Upper lobe of right lung (tissue), 1 donor: ENCODE measurements at regions of chr13 and their contacts with region 1.

Region 1: DNA sequence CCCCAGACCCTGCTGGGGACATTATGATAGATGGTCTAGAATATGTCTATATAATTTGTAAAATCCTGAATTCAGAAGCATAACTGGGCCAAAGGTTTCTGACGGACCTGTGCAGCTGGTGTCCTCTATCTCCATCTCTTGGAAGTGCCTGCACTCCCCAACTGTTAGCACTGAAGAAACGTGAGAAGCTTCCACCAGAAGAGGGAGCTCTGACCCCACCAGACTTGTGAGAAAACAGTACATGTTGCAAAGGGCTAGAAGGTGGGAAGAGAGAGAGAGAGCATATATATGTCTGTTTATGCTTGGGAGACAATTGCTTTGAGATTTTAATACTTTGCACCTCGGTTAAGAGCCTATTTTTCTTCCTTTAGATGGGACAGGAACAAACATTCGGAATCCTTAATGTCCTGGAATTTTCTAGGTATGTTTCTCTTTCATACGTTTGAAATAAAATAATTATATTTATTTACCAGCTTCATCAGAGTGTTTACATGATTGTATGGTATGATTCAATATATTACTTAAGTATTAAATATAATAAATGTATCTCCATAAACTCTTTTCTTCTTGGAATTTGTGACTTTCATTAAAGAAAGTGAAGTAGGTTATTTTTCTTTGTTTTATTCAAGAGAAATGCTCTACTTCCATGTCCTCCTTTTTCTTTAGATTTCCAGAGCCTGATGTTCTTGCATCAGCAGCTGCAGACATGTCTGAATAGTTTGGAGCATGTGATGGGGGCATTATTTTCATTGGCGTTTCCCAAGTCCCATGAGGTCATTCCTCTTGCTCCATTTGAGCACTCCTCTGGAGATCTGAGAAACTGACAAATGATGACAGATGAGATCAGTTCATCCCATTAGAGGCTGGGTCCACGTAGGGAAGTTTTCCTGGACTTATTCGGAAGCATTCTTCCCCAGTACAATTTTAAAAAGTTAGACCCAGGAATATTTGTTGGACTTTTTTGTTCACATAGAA is 202.9 kb downstream of the ATP8A2 start:
- DNase-seq: no peak
- ATAC-seq: peak; percentile 93
- H3K4me3 ChIP-seq: no peak overlapping the region
- H3K27ac ChIP-seq: no peak overlapping the region
- H3K4me1 ChIP-seq: no peaks in the 10 kb centered on the region
- H3K27me3 ChIP-seq: peaks cover 8% of the 10 kb centered on the region
- CTCF ChIP-seq: peak; percentile 82

Region 2: DNA sequence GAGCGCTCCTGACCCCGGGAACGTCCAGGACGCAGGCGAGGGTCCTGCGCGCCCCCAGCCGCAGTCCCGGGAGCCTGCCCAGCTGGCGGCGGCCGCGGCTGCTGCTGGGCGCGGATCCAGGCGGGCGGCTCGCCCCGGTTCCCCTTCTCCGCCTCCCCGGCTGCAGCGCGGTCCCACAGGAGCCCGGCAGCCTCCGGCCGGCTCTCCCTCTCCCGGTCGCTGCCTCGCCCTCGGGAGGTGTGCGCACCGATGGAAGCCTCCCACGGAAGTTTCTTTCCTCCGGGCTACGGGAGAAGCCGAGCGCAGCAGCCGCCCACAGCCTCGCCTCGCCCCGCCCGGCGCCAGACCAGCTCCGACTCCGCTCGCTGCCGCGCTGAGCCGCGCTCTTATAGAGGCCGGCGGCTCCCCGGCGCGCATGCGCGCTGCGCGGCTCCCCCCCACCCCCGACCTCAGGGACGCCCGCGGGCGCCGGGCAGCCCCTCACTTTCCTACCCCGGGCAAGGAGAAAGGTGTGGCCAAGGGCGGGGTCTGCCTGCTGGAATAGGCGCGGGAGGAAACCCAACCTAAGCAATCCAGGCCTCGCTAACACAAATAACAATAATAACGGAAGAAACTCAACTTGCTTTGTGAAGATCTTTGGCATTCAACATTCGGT is 477.1 kb after region 1 on chr13 and contains the start of gene SHISA2:
- intact Hi-C with region 1: loop called (anchors 10 kb)
- DNase-seq: peak; percentile 78
- ATAC-seq: peak; percentile 84
- H3K4me3 ChIP-seq: peak within 1 kb of the TSS; percentile 52
- H3K27ac ChIP-seq: peak within 1 kb of the TSS; percentile 42
- H3K4me1 ChIP-seq: no peaks in the 10 kb centered on the region
- H3K27me3 ChIP-seq: peaks cover 43% of the 10 kb centered on the region
- CTCF ChIP-seq: no peak
- total RNA-seq, gene SHISA2: 26.3 TPM